PC-3 (cell line): ENCODE measurements at regions of chr5 and their contacts with region 1.

Region 1: DNA sequence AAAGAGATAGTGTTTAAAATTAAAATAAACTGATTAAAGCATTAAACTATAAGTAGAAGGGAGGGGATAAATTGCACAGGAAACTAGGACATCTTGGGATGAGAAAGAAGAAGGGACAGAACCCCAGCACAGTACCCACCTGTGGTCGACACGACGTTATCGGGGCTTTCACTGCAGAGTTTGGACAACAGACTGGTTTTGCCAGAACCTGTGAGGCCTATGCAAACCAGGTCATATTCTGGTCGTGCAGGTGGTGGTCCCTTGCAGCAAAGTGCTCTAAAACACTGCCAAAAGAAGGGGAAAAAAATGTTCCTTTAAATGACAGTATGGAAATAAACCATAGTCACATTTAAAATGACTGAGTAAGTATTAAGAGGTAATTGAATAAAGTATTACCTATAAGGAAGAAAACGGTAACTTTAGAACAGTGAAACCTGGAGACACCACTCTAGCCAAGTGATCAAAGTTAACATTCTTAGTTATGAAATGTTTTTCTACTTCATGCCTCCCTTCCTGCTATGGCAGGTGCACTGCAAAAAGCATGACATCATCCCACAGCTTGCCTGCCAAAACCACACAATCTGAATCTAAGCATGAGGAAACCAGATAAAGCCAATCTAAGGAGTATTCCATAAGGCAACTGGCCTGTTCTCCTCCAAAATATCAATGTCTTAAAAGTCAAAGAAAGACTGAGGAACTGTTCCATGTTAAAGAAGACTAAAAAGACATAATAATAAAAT is 138.6 kb downstream of the ARL15 start:
- DNase-seq: peak; percentile 3
- ATAC-seq: no peak
- H3K4me3 ChIP-seq: no peak overlapping the region
- H3K27ac ChIP-seq: no peak overlapping the region
- H3K4me1 ChIP-seq: no peaks in the 10 kb centered on the region
- H3K27me3 ChIP-seq: no peaks in the 10 kb centered on the region
- CTCF ChIP-seq: no peak

Region 2: DNA sequence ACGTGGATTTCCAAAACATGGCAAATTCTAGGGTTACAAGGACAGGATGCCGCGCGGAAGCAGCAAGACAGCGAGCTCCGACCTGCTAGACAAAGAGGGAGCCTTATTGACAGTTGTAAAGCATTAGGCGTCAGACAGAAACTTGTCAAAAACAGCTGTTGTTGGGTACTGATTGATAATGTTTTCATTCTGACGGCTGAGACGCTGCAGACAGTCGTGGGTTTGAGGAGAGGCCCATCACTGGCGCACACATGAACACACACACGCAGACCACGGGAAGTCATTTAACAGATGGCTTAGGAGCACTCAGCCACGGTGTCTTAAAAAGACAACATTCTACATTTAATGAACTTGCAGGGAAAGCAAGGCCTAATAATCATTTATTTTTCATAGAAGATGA is 287.4 kb before region 1 on chr5:
- CTCF ChIA-PET with region 1: no interaction called
- POLR2A ChIA-PET with region 1: interaction called, 25 read pairs
- intact Hi-C with region 1: no loop called
- DNase-seq: no peak
- ATAC-seq: no peak
- H3K4me3 ChIP-seq: no peak overlapping the region
- H3K27ac ChIP-seq: no peak overlapping the region
- H3K4me1 ChIP-seq: no peaks in the 10 kb centered on the region
- H3K27me3 ChIP-seq: no peaks in the 10 kb centered on the region
- CTCF ChIP-seq: no peak

Region 3: GRCh38 chr5:54090495-54091084 is 81.2 kb before region 1 on chr5:
- CTCF ChIA-PET with region 1: no interaction called
- POLR2A ChIA-PET with region 1: no interaction called
- intact Hi-C with region 1: no loop called
- DNase-seq: peak; percentile 23
- ATAC-seq: peak; percentile 54; the same call in 1 of the 2 replicates
- H3K4me3 ChIP-seq: no peak overlapping the region
- H3K27ac ChIP-seq: no peak overlapping the region
- H3K4me1 ChIP-seq: 0 out of 2 replicates have a peak, but pooled peaks cover 6% of the 10 kb centered on the region
- H3K27me3 ChIP-seq: no peaks in the 10 kb centered on the region
- CTCF ChIP-seq: peak; percentile 10; the same call in 1 of the 2 replicates

Region 4: DNA sequence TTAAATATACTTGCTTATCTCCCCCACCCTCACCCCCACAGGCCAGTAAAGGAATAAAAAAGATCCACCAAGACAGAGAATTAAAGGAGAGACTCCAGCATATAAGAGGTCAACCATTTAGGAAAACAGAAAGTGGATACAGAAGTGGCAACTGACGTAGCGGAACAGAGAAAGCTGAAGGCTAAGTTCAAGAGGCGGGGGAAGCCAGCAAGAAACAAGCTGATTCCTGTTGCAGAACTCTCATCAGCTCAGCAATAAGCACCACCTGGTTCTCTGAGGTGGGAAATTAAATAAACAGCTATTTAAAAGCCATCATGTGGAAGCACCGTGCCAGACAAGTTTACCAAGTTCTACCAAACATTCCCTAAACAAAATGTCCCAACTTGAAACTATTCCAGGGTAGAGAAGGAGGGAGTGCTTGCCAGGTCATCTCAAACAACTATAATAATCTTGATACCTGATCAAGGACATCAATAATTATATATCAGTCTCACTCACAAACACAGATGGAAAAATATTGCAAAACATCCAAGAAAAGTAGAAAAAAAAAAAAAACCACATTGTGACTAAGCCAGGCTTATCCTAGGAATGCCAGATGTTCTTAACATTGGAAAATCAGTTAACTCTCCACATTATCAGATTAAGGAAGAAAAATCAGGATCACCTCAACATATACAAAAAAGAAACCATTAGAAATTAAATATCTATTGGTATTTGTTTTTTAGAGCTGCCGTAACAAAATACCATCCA is 145.9 kb after region 1 on chr5:
- CTCF ChIA-PET with region 1: no interaction called
- POLR2A ChIA-PET with region 1: no interaction called
- intact Hi-C with region 1: no loop called
- DNase-seq: no peak
- ATAC-seq: no peak
- H3K4me3 ChIP-seq: no peak overlapping the region
- H3K27ac ChIP-seq: no peak overlapping the region
- H3K4me1 ChIP-seq: peaks cover 8% of the 10 kb centered on the region
- H3K27me3 ChIP-seq: no peaks in the 10 kb centered on the region
- CTCF ChIP-seq: no peak